A549 (cell line): ENCODE measurements at regions of chr9 and their contacts with region 1.

Region 1: GRCh38 chr9:12853051-12853450 is 78.2 kb downstream of the LURAP1L start:
- DNase-seq: peak in 1 of 2 experiments; percentile 16
- ATAC-seq: peak; percentile 20 to 39; a peak in 1 of 6 replicates
- H3K4me3 ChIP-seq: no peak overlapping the region
- H3K27ac ChIP-seq: peak overlapping the region in 1 of 2 experiments; percentile 23; a peak in 2 of 6 replicates
- H3K4me1 ChIP-seq: peaks cover 16% of the 10 kb centered on the region; the same call in 2 of the 3 replicates
- CTCF ChIP-seq: no peak
- EP300 ChIP-seq: no peak
- POLR2A ChIP-seq: no peak
- RAD21 ChIP-seq: no peak

Region 2: GRCh38 chr9:11686733-11687132 is 1166.3 kb before region 1 on chr9:
- CTCF ChIA-PET with region 1: no interaction called
- POLR2A ChIA-PET with region 1: no interaction called
- DNase-seq: no peak
- ATAC-seq: no peak
- H3K4me3 ChIP-seq: no peak overlapping the region
- H3K27ac ChIP-seq: no peak overlapping the region
- H3K4me1 ChIP-seq: no peaks in the 10 kb centered on the region
- CTCF ChIP-seq: no peak
- EP300 ChIP-seq: no peak
- POLR2A ChIP-seq: no peak
- RAD21 ChIP-seq: no peak

Region 3: DNA sequence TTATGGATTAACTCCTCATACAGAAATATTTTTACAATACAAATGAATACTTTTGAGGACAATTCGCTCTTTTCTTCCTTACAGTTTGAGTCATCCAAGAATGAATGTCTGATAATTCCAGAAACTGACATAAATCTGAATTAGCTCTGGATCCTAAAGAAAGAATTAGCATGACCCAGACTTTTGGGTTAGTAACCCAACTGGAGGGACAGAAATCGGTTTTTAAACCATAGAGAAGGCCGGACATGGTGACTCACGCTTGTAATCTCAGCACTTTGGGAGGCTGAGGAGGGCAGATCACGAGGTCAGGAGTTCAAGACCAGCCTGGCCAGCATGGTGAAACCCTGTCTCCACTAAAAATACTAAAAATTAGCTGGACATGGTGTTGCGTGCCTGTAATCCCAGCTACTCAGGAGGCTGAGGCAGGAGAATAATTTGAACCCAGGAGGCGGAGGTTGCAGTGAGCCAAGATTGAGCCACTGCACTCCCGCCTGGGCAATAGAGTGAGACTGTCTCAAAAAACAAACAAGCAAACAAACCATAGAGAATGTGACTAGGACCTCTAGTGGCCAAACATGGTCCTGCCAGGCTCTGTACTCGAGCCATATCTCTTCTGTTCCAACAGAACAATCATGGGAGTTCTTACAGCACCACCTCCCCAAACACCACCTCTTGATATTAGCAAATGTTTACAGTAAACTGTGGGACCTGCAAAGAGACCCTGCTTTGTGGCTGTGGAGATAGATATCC is 33.4 kb before region 1 on chr9:
- CTCF ChIA-PET with region 1: interaction called, 10 read pairs
- POLR2A ChIA-PET with region 1: no interaction called
- DNase-seq: peak in 1 of 2 experiments; percentile 70
- ATAC-seq: no peak
- H3K4me3 ChIP-seq: no peak overlapping the region
- H3K27ac ChIP-seq: peak overlapping the region; percentile 93 to 94
- H3K4me1 ChIP-seq: peaks cover 53% of the 10 kb centered on the region
- CTCF ChIP-seq: peak; percentile 30
- EP300 ChIP-seq: no peak
- POLR2A ChIP-seq: no peak
- RAD21 ChIP-seq: peak; percentile 14 to 42; a peak in 2 of 5 replicates